Naive thymus-derived CD4-positive, alpha-beta T cell (primary cell): ENCODE measurements at regions of chr16 and their contacts with region 1.

Region 1: DNA sequence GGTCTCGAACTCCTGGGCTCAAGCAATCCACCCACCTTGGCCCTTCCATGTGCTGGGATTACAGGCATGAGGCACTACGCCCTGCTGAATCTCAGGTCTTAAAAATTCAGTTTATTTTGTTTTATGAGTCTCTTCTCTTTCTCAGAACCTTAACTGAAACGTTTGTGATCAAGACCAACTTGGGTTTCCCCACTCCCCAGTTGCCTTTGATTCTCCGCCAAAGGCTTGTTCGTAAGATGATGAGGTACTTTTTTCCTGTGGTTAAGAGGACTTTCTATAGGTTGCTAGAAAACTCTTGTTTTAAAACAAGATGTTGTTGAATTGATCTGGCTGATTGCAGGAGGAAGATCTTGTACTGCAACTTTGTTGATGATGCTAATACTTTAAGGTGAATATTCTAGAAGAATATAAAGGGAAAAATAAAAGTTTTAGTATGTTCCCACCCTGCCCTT is 11.7 kb downstream of the ABCC1 start:
- DNase-seq: peak; percentile 17 to 94 (median 91)
- ATAC-seq: peak; percentile 91
- H3K4me3 ChIP-seq: peak overlapping the region; percentile 55
- H3K4me3 Mint-ChIP-seq: peak overlapping the region; percentile 54 to 92 (median 88)
- H3K27ac ChIP-seq: peak overlapping the region; percentile 91
- H3K27ac Mint-ChIP-seq: peak overlapping the region; percentile 96 to 99 (median 98)
- H3K4me1 ChIP-seq: peaks cover 32 to 34% of the 10 kb centered on the region in 2 donors
- H3K4me1 Mint-ChIP-seq: peaks cover 31 to 86% (median 72%) of the 10 kb centered on the region in 7 donors
- H3K27me3 ChIP-seq: no peaks in the 10 kb centered on the region
- H3K27me3 Mint-ChIP-seq: no peaks in the 10 kb centered on the region

Region 2: GRCh38 chr16:15829460-15829859 is 131.6 kb before region 1 on chr16:
- CTCF ChIA-PET with region 1: no interaction called
- POLR2A ChIA-PET with region 1: no interaction called
- intact Hi-C with region 1: no loop called
- DNase-seq: no peak
- ATAC-seq: peak; percentile 38
- H3K4me3 ChIP-seq: no peak overlapping the region
- H3K4me3 Mint-ChIP-seq: no peak overlapping the region
- H3K27ac ChIP-seq: no peak overlapping the region
- H3K27ac Mint-ChIP-seq: no peak overlapping the region
- H3K4me1 ChIP-seq: no peaks in the 10 kb centered on the region
- H3K4me1 Mint-ChIP-seq: peaks cover 0 to 3% (median 0%) of the 10 kb centered on the region in 7 donors
- H3K27me3 ChIP-seq: no peaks in the 10 kb centered on the region
- H3K27me3 Mint-ChIP-seq: peaks cover 0 to 1% (median 0%) of the 10 kb centered on the region in 5 donors

Region 3: GRCh38 chr16:15888072-15888976 is 72.8 kb before region 1 on chr16 and contains the start of gene CEP20:
- CTCF ChIA-PET with region 1: no interaction called
- POLR2A ChIA-PET with region 1: interaction called, 14 read pairs
- intact Hi-C with region 1: loop called (anchors 1 kb)
- DNase-seq: peak; percentile 98 to 100 (median 99)
- ATAC-seq: peak; percentile 100
- H3K4me3 ChIP-seq: peak within 1 kb of the TSS; percentile 95
- H3K4me3 Mint-ChIP-seq: peak within 1 kb of the TSS; percentile 96 to 100 (median 99)
- H3K27ac ChIP-seq: peak within 1 kb of the TSS; percentile 89
- H3K27ac Mint-ChIP-seq: peak within 1 kb of the TSS; percentile 94 to 100 (median 97)
- H3K4me1 ChIP-seq: peaks cover 15 to 17% of the 10 kb centered on the region in 2 donors
- H3K4me1 Mint-ChIP-seq: peaks cover 26 to 47% (median 39%) of the 10 kb centered on the region in 7 donors
- H3K27me3 ChIP-seq: no peaks in the 10 kb centered on the region
- H3K27me3 Mint-ChIP-seq: no peaks in the 10 kb centered on the region
- total RNA-seq, gene CEP20: 15.4 to 34.6 (median 27.8) TPM

Region 4: GRCh38 chr16:15949210-15950160 is 11.6 kb before region 1 on chr16 and contains the start of gene ABCC1:
- CTCF ChIA-PET with region 1: no interaction called
- POLR2A ChIA-PET with region 1: interaction called, 33 read pairs
- intact Hi-C with region 1: loop called (anchors 1 kb)
- DNase-seq: peak; percentile 21 to 69 (median 55)
- ATAC-seq: peak; percentile 80
- H3K4me3 ChIP-seq: peak within 1 kb of the TSS; percentile 83
- H3K4me3 Mint-ChIP-seq: peak within 1 kb of the TSS; percentile 91 to 100 (median 97)
- H3K27ac ChIP-seq: peak within 1 kb of the TSS; percentile 99
- H3K27ac Mint-ChIP-seq: peak within 1 kb of the TSS; percentile 93 to 99 (median 98)
- H3K4me1 ChIP-seq: peaks cover 11 to 15% of the 10 kb centered on the region in 2 donors
- H3K4me1 Mint-ChIP-seq: peaks cover 31 to 47% (median 39%) of the 10 kb centered on the region in 7 donors
- H3K27me3 ChIP-seq: no peaks in the 10 kb centered on the region
- H3K27me3 Mint-ChIP-seq: no peaks in the 10 kb centered on the region
- total RNA-seq, gene ABCC1: 57.3 to 95.8 (median 64.1) TPM

Region 5: GRCh38 chr16:16004314-16004749 is 43.2 kb after region 1 on chr16:
- CTCF ChIA-PET with region 1: no interaction called
- POLR2A ChIA-PET with region 1: no interaction called
- intact Hi-C with region 1: loop called (anchors 5 kb)
- DNase-seq: no peak
- ATAC-seq: no peak
- H3K4me3 ChIP-seq: no peak overlapping the region
- H3K4me3 Mint-ChIP-seq: no peak overlapping the region
- H3K27ac ChIP-seq: no peak overlapping the region
- H3K27ac Mint-ChIP-seq: peak overlapping the region in 2 of 9 donors; percentile 34 to 47
- H3K4me1 ChIP-seq: peaks cover 0 to 2% of the 10 kb centered on the region in 2 donors
- H3K4me1 Mint-ChIP-seq: peaks cover 28 to 53% (median 36%) of the 10 kb centered on the region in 7 donors
- H3K27me3 ChIP-seq: no peaks in the 10 kb centered on the region
- H3K27me3 Mint-ChIP-seq: no peaks in the 10 kb centered on the region

Region 6: GRCh38 chr16:16062023-16062932 is 101.2 kb after region 1 on chr16:
- CTCF ChIA-PET with region 1: no interaction called
- POLR2A ChIA-PET with region 1: no interaction called
- intact Hi-C with region 1: loop called in 1 of 2 experiments (anchors 5 kb)
- DNase-seq: peak in 5 of 9 donors; percentile 8 to 24 (median 18)
- ATAC-seq: peak; percentile 67
- H3K4me3 ChIP-seq: no peak overlapping the region
- H3K4me3 Mint-ChIP-seq: peak overlapping the region in 6 of 10 donors; percentile 6 to 46 (median 20)
- H3K27ac ChIP-seq: no peak overlapping the region
- H3K27ac Mint-ChIP-seq: peak overlapping the region in 6 of 9 donors; percentile 3 to 76 (median 43)
- H3K4me1 ChIP-seq: peaks cover 11 to 12% of the 10 kb centered on the region in 2 donors
- H3K4me1 Mint-ChIP-seq: peaks cover 14 to 49% (median 27%) of the 10 kb centered on the region in 7 donors
- H3K27me3 ChIP-seq: no peaks in the 10 kb centered on the region
- H3K27me3 Mint-ChIP-seq: no peaks in the 10 kb centered on the region